ENCODE measurements at regions of chr3 and their contacts with region 1.

Region 1: DNA sequence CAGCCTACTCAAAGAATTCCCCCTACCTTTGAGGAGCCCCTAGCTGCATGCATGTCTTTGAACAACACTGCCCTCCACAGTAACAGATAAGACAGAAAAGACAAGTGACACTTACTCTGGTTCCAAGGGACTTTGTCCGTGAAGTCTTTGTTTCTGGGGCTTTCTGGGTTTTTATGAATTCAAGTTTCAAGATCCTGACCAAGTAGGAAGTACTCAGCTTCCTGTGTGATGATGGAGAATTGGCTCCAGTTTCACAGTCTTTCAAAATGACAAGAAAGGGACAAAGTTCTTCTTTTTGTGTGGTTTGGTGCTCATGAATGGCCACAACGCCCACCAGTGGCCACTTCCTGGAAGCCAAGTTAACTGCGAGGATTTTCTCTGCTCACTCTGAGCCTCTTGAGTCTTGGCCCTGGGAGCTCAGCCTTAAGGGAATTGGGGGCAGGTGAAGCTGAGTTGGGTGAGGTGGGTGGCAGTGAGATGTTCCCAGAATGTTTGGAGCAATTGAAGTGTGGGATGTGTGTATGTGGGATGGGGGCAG is at the start of gene CCR1:
- DNase-seq: peak; percentile 75
- H3K4me3 Mint-ChIP-seq: peak within 1 kb of the TSS; percentile 51
- H3K27ac Mint-ChIP-seq: peak within 1 kb of the TSS; percentile 81
- H3K4me1 Mint-ChIP-seq: peaks cover 52% of the 10 kb centered on the region
- H3K27me3 Mint-ChIP-seq: peaks cover 12% of the 10 kb centered on the region

Region 2: DNA sequence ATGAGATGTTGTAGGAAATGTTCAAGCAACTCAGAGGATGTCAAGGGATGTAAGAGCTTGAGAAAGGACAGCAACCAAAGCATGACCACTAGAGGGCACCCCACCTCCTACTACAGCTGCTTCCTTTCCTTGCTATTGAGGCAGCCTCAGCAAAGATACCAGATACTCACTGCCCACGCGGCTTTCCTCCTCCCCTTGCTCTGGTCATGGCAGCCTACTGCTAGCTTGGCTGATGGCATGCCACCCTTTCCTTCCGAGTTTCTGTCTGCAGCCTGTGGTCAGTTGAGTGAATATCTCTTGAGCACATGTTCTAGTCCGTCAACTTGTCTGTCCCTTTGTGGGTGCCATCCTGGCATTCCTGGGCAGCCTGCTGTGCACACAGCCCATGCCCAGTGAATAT is 269.4 kb before region 1 on chr3:
- CTCF ChIA-PET with region 1: interaction called, 19 read pairs
- DNase-seq: peak; percentile 92
- H3K4me3 Mint-ChIP-seq: no peak overlapping the region
- H3K27ac Mint-ChIP-seq: no peak overlapping the region
- H3K4me1 Mint-ChIP-seq: peaks cover 38% of the 10 kb centered on the region
- H3K27me3 Mint-ChIP-seq: peaks cover 7% of the 10 kb centered on the region

Region 3: GRCh38 chr3:46089237-46090011 is 118.8 kb before region 1 on chr3:
- CTCF ChIA-PET with region 1: interaction called, 49 read pairs
- DNase-seq: peak; percentile 25
- H3K4me3 Mint-ChIP-seq: no peak overlapping the region
- H3K27ac Mint-ChIP-seq: no peak overlapping the region
- H3K4me1 Mint-ChIP-seq: peaks cover 40% of the 10 kb centered on the region
- H3K27me3 Mint-ChIP-seq: peaks cover 16% of the 10 kb centered on the region

Region 4: DNA sequence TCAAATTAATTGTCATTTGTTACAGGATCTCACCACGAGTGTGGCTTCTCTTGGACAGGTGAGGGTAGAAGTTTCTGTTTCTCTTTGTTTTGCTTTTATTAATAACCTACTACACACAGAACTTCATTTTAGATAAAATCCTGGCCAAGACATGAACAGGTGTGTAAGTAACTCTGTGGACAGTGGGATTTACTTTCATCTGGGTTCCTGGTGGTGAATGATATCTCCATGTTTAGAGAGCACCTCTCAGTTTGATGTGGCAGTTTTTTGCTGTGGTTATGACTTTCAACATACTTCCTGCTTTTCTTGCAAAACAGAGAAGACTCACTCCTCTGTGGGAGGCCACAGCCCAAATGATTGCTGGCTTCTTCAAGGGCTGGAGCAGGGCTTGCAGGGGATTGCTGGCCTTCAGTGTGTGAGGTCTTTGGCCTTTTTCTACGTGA is 109.9 kb before region 1 on chr3:
- CTCF ChIA-PET with region 1: interaction called, 11 read pairs
- DNase-seq: peak; percentile 73
- H3K4me3 Mint-ChIP-seq: peak overlapping the region; percentile 16
- H3K27ac Mint-ChIP-seq: peak overlapping the region; percentile 94
- H3K4me1 Mint-ChIP-seq: peaks cover 62% of the 10 kb centered on the region
- H3K27me3 Mint-ChIP-seq: peaks cover 6% of the 10 kb centered on the region

Region 5: DNA sequence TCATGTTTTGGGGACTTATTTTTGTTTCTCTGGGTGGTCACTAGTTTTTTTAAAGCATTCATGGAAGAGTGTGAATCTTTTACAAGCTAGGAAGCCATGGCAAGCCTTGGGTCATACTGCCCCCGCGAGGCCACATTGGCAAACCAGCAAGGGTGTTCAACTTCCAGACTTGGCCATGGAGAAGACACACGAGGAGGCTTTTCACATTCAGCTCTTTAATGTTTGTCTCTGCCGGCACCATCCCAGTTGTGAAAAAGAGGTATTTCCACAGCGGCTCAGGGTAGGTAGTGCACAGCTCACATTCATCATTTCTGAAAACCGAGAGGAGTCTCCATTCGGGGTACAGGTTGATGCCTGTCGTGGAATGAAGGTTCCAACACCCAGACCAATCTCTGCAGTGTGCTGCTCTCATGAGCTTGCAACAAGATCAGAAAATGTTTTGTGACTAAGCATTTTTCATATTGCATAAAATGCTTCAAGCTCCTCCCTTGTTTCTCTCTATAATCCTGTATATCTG is 170.2 kb after region 1 on chr3:
- CTCF ChIA-PET with region 1: interaction called, 228 read pairs
- DNase-seq: peak; percentile 81
- H3K4me3 Mint-ChIP-seq: no peak overlapping the region
- H3K27ac Mint-ChIP-seq: no peak overlapping the region
- H3K4me1 Mint-ChIP-seq: peaks cover 65% of the 10 kb centered on the region
- H3K27me3 Mint-ChIP-seq: peaks cover 15% of the 10 kb centered on the region

Measured in activated naive CD4-positive, alpha-beta T cell treated with anti-CD3 and anti-CD28 coated beads, Interleukin-2, amount 10 ng/mL, durations not matched to agents 7 days and 5 days (primary cell).